ENCODE measurements at regions of chr12 and their contacts with region 1.

Region 1: GRCh38 chr12:22409377-22410164 is 75.1 kb upstream of the ST8SIA1 start:
- DNase-seq: peak; percentile 86
- ATAC-seq: peak; percentile 93
- H3K4me3 Mint-ChIP-seq: peak overlapping the region; percentile 76
- H3K27ac Mint-ChIP-seq: peak overlapping the region; percentile 89
- H3K4me1 Mint-ChIP-seq: peaks cover 42% of the 10 kb centered on the region
- H3K27me3 Mint-ChIP-seq: no peaks in the 10 kb centered on the region

Region 2: DNA sequence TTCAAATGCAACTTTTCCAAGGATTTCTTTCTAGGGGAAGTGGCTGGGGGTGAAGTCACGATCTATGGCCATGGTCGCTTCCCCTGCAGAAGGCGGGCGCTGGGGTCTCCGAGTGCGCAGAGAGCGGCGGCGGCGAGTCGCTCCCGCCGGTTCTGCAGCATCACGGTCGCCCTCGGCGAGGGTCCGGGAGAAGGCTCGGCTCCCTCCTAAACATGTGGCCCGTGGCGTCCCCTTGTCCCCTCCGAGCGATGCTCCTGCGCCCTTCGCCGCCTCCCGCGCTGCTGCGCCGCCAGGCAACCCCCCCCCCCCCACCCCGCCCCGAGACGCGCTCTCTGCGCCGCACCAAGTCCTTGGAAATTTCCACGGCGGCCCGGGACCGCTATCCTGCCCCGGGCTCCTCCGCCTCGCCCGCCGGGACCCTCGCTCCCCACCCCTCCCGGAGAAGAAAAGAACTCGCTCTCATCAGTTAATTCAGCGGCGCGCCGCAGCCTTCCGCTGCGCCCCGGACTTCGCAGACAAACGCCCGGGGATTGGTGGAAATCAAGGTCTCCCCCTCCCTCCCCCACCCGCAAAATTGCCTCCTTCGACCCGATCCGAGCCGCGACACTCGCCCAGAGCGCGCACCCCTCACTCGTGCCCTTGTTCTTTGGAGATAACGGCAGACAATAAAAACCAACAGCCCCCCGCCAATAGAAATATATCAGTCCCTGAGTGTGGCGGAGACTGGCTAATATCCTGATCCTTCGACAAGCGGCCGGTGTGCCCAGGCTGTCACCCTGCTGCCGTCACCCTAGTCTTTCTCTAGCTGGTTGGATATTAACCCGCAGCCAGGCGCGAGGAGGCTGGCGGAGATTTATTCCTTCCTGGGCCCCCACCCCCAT is 74.9 kb before region 1 on chr12 and contains the start of gene ST8SIA1:
- CTCF ChIA-PET with region 1: interaction called, 16 read pairs
- DNase-seq: peak; percentile 76
- ATAC-seq: peak; percentile 48
- H3K4me3 Mint-ChIP-seq: peak within 1 kb of the TSS; percentile 88
- H3K27ac Mint-ChIP-seq: peak within 1 kb of the TSS; percentile 82
- H3K4me1 Mint-ChIP-seq: peaks cover 26% of the 10 kb centered on the region
- H3K27me3 Mint-ChIP-seq: peaks cover 13% of the 10 kb centered on the region
- total RNA-seq, gene ST8SIA1: 2.7 to 4.6 TPM

Region 3: GRCh38 chr12:22473212-22473611 is 63.6 kb after region 1 on chr12:
- CTCF ChIA-PET with region 1: no interaction called
- DNase-seq: no peak
- ATAC-seq: no peak
- H3K4me3 Mint-ChIP-seq: no peak overlapping the region
- H3K27ac Mint-ChIP-seq: no peak overlapping the region
- H3K4me1 Mint-ChIP-seq: peaks cover 25% of the 10 kb centered on the region
- H3K27me3 Mint-ChIP-seq: no peaks in the 10 kb centered on the region

Measured in activated CD8-positive, alpha-beta memory T cell treated with anti-CD3 and anti-CD28 coated beads, Interleukin-2, amount 10 ng/mL, durations not matched to agents 7 days and 5 days (primary cell).